Heart left ventricle (tissue), 16 donors: ENCODE measurements at regions of chr3 and their contacts with region 1.

Region 1: DNA sequence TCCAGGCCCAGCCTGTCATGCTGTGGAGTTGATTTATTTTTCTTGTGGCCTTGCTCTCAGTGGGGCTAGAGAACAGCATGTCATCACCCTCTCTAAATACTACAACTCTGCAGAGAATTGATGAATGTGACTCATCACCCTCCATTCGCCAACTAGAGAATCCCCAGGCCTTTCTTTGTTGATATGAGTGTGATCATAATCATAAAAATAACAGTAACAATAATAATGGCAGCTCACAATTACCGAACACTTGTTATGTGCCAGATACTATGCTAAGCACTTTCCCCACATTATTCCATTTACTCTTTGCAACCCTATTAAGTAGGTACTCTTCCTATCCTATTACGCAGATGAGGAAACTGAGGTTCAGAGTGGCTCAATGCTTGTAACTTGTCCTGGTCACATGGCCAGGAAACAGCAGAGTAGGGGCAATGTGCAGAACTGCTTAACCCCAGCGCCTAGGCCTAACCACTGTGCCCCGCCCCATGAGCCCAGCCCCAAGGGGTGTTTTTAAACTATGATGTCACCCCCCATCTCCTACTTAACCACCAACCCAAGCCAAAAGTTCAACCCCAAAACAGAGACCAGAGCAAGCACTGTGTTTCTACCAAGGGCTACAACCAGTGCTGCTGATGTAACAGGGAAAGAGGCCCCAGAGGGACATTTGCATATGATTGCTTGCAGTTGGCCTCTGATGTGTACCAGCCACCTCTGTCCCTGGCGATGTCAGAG is 104.5 kb downstream of the ADCY5 start:
- DNase-seq: peak in 1 of 5 donors; percentile 13
- ATAC-seq: peak in 3 of 4 donors; percentile 4 to 24 (median 13)
- H3K4me3 ChIP-seq: no peak overlapping the region
- H3K27ac ChIP-seq: peak overlapping the region; percentile 8 to 94 (median 78)
- H3K4me1 ChIP-seq: peaks cover 4 to 97% (median 57%) of the 10 kb centered on the region in 12 donors
- H3K27me3 ChIP-seq: no peaks in the 10 kb centered on the region
- CTCF ChIP-seq: no peak
- POLR2A ChIP-seq: no peak

Region 2: DNA sequence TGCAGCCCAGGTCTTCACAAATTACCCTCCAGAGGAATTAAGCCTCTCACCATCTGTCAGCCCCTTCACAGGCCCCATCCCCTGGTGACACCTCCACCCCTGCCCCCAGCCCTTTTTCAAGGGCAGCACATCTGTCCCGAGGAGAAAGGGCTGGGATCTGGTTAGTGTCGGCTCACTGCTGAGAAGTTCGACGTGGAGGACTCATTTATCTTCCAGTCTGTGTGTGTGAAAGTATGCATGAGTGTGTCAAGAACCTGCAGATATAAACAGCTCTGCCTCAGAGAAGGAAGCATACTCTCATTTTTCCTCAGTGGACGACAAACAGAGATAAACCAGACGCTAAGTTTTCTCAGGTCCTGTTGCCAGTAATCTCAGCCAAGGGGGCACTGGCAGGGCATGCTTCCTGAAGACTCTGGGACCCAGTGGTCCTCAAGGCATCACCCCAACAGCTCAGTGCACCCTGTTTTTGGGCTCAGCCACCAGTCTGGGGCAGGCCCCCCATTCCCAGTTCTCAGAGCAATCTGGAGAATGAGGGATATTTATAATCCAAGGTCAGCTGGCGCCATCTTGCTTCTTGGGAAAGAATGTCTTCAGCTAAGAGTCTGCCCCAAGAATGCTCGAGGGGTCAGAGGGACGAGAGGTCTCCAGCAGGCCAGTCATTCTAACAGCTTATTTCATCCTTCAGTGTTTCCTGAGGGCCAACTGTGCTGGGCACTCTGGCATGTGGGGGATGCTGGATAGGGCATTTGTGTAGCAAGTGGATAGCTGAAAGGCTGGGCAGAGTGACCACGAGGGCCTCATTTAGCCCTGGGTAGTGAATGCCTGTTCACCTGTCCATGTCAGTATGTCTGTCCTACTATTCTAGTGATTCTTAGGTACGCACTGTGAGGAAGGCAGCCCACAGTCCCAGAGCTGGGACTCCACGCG is 30.9 kb after region 1 on chr3:
- intact Hi-C with region 1: loop called in 1 of 10 experiments (anchors 5 kb)
- DNase-seq: peak in 3 of 5 donors; percentile 55 to 76 (median 64)
- ATAC-seq: peak; percentile 34 to 63 (median 56)
- H3K4me3 ChIP-seq: no peak overlapping the region
- H3K27ac ChIP-seq: peak overlapping the region; percentile 60 to 96 (median 85)
- H3K4me1 ChIP-seq: peaks cover 12 to 98% (median 62%) of the 10 kb centered on the region in 12 donors
- H3K27me3 ChIP-seq: no peaks in the 10 kb centered on the region
- CTCF ChIP-seq: peak in 1 of 12 donors; percentile 14
- POLR2A ChIP-seq: no peak

Region 3: GRCh38 chr3:123406598-123406997 is 62.3 kb after region 1 on chr3:
- intact Hi-C with region 1: loop called in 5 of 10 experiments (anchors 5 to 10 kb)
- DNase-seq: peak; percentile 80 to 95 (median 89)
- ATAC-seq: peak; percentile 83 to 84 (median 84)
- H3K4me3 ChIP-seq: no peak overlapping the region
- H3K27ac ChIP-seq: peak overlapping the region; percentile 63 to 94 (median 89)
- H3K4me1 ChIP-seq: peaks cover 0 to 94% (median 46%) of the 10 kb centered on the region in 12 donors
- H3K27me3 ChIP-seq: no peaks in the 10 kb centered on the region
- CTCF ChIP-seq: no peak
- POLR2A ChIP-seq: peak in 1 of 2 donors; percentile 13

Region 4: GRCh38 chr3:123412811-123413604 is 68.7 kb after region 1 on chr3:
- intact Hi-C with region 1: loop called in 5 of 10 experiments (anchors 5 to 10 kb)
- DNase-seq: peak; percentile 71 to 83 (median 76)
- ATAC-seq: peak; percentile 79 to 89 (median 84)
- H3K4me3 ChIP-seq: peak overlapping the region in 6 of 12 donors; percentile 0 to 34 (median 22)
- H3K27ac ChIP-seq: peak overlapping the region; percentile 74 to 94 (median 89)
- H3K4me1 ChIP-seq: peaks cover 5 to 98% (median 62%) of the 10 kb centered on the region in 12 donors
- H3K27me3 ChIP-seq: no peaks in the 10 kb centered on the region
- CTCF ChIP-seq: peak in 1 of 12 donors; percentile 14
- POLR2A ChIP-seq: no peak

Region 5: DNA sequence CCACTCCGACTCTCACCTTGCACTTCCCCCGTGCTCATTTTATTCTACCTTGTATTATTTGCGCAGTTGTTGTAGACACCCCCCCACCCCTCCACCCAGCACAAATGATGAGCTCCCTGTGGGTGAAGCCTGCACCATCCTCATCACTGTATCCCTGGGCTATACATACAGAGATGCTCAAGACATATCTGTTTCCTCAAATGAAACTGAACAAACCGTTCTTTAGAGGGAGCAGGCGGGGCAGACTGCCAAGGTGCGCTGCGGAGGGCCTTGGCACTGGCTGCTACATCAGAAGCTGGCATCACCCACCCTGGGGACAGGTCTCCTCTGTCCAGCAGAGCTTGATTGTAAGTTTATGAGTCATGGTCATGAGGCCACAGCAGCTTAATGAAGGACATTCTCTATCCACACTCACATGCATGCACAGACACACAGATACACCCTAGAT is 75.5 kb after region 1 on chr3:
- intact Hi-C with region 1: loop called in 1 of 10 experiments (anchors 5 kb)
- DNase-seq: peak; percentile 73 to 92 (median 83)
- ATAC-seq: peak; percentile 51 to 76 (median 68)
- H3K4me3 ChIP-seq: no peak overlapping the region
- H3K27ac ChIP-seq: peak overlapping the region; percentile 37 to 94 (median 88)
- H3K4me1 ChIP-seq: peaks cover 3 to 100% (median 64%) of the 10 kb centered on the region in 12 donors
- H3K27me3 ChIP-seq: no peaks in the 10 kb centered on the region
- CTCF ChIP-seq: no peak
- POLR2A ChIP-seq: no peak

Region 6: DNA sequence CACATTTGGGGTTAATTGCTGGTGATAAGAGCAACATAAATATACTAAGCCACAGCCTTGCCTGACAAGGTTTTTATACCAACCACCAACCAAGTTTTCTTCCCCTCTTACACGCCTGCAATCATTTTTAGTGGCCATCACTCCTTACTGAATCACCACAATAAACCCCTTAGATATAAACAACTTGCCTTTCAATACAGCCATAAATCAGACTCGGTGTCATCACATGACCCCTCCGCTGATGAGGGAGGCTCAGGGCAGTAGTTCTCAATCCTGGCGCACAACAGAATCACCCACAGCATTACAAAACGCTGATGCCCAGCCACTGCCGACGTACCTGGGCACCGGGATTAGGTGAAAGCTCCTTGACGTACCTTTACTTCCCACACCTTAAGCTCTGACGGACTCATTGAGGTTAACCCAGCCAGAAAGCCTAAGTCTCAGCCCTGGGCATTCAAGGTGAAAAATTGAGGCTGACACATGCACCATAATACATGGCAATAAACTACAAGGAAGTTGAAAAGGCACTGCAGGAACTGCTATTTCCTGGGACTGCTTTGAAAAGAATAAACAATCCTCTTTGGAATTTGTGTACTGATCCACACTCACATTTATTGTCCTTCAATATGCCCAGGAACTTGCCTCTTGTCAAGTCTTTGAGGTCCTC is 87.5 kb after region 1 on chr3:
- intact Hi-C with region 1: loop called in 1 of 10 experiments (anchors 5 kb)
- DNase-seq: no peak
- ATAC-seq: no peak
- H3K4me3 ChIP-seq: no peak overlapping the region
- H3K27ac ChIP-seq: peak overlapping the region in 7 of 12 donors; percentile 32 to 92 (median 69)
- H3K4me1 ChIP-seq: peaks cover 0 to 92% (median 45%) of the 10 kb centered on the region in 12 donors
- H3K27me3 ChIP-seq: no peaks in the 10 kb centered on the region
- CTCF ChIP-seq: no peak
- POLR2A ChIP-seq: no peak